HEK293T (cell line): ENCODE measurements at regions of chr4 and their contacts with region 1.

Region 1: DNA sequence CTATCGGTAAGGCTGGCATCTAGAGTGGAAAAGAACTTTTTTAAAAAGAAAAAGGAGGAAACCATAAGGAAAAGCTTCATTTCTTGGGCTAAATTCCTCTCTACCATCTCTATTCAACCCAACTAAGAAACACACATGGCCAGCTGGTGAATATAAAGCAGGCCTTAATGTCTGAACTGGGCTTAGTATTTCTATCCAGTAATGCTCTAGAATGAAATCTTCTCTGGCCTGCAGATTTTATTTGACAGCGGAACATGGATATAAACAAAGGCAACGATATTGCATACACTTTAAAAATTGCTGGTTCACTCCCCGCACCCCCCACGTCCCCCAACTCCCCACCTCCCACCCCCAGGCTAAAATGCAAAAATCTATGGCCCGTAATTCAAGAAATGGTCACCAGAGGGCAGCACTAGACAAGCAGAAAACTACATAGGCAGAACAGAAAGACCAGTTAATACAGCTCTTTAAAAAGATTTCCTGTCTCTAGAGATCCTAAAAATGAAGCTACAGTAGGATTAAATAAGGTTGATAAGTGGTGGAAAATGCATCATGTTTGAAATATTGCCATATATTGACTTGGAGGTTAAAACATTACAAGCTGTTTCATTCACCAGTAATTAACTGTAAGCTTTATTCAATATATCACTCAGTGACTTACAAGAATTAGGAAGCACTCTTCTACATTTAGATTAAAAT is 155.2 kb upstream of the GALNT7 start:
- DNase-seq: peak; percentile 44

Region 2: GRCh38 chr4:172975651-172976229 is 37.6 kb before region 1 on chr4:
- CTCF ChIA-PET with region 1: interaction called, 11 read pairs
- POLR2A ChIA-PET with region 1: no interaction called
- DNase-seq: no peak

Region 3: DNA sequence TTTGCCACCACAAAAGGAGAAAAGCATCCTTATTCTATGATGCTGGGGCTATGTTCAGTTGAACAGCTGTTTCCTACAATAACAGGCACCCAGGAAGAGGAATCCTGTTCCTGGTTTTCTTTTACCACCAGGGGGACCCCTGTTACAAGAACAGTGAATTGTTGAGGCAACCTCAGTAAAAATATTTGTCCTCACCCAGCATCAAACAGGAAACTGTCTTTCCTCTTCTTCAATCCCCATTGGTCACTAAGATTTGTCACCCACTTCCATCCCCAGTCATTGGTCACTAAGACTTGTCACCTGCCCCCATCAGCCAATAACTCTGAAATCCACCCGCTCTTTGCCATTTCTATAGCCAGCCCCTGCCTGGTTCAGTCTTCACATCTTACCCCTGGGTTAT is 11.8 kb after region 1 on chr4:
- CTCF ChIA-PET with region 1: interaction called, 16 read pairs
- POLR2A ChIA-PET with region 1: no interaction called
- DNase-seq: peak; percentile 59

Region 4: GRCh38 chr4:173257732-173258717 is 244.6 kb after region 1 on chr4:
- CTCF ChIA-PET with region 1: interaction called, 33 read pairs
- POLR2A ChIA-PET with region 1: no interaction called
- DNase-seq: peak; percentile 66